Prostate gland (tissue), 2 donors: ENCODE measurements at regions of chr10 and their contacts with region 1.

Region 1: GRCh38 chr10:92110039-92110794 is 180.7 kb downstream of the CPEB3 start:
- DNase-seq: no peak
- H3K4me3 ChIP-seq: no peak overlapping the region
- H3K27ac ChIP-seq: no peak overlapping the region
- H3K4me1 ChIP-seq: no peaks in the 10 kb centered on the region
- H3K27me3 ChIP-seq: no peaks in the 10 kb centered on the region
- CTCF ChIP-seq: no peak
- POLR2A ChIP-seq: no peak

Region 2: DNA sequence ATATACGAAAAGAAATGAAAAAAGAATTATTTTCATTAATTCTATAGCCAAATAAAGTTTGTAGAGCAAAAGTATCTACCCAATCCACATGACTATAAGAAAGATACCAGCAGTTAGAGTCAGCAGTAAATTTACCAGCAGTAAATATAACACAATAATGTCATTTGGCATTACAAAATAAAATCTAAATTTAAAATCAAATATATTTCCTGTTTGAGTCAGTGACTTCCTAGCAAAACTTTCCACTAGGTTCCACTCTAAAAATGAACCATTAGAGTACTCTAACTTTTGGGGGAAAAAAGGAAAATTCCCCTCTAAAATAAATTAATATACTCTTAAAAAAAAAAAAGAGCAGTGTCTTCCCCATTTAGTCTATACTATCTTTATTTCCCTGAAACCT is 35.9 kb after region 1 on chr10:
- intact Hi-C with region 1: loop called (anchors 5 kb)
- DNase-seq: no peak
- H3K4me3 ChIP-seq: no peak overlapping the region
- H3K27ac ChIP-seq: no peak overlapping the region
- H3K4me1 ChIP-seq: no peaks in the 10 kb centered on the region
- H3K27me3 ChIP-seq: no peaks in the 10 kb centered on the region
- CTCF ChIP-seq: no peak
- POLR2A ChIP-seq: no peak